ENCODE measurements at regions of chr18 and their contacts with region 1.

Region 1: GRCh38 chr18:50819728-50820378 is at the start of gene MRO:
- DNase-seq: peak; percentile 49 to 88
- H3K4me3 ChIP-seq: peak within 1 kb of the TSS; percentile 42 to 55
- H3K27ac ChIP-seq: no peak within 1 kb of the TSS
- H3K4me1 ChIP-seq: peaks cover 0 to 6% of the 10 kb centered on the region in 2 donors
- H3K27me3 ChIP-seq: no peaks in the 10 kb centered on the region
- CTCF ChIP-seq: peak; percentile 82 to 94 (median 85)
- total RNA-seq, gene MRO: 1.4 TPM

Region 2: DNA sequence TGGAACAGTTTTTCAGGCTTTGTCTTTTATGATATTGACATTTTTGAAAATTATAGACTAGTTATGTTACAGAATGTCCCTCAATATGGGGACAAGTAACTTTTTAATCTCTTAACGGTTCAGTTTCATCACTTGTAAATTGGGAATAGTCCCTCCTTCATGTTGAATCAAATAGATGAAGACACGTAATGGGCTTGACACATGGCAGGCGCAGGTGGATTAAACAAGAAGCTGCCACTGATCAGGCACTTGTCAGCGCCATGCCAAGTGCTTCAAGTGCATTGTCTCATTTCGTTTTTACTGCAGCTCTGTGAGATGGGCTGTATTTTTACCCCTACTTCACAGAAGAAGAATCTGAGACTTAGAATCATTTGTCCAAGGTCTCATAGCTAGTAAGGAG is 200.7 kb after region 1 on chr18:
- intact Hi-C with region 1: loop called (anchors 5 kb)
- DNase-seq: no peak
- H3K4me3 ChIP-seq: no peak overlapping the region
- H3K27ac ChIP-seq: no peak overlapping the region
- H3K4me1 ChIP-seq: no peaks in the 10 kb centered on the region
- H3K27me3 ChIP-seq: no peaks in the 10 kb centered on the region
- CTCF ChIP-seq: no peak

Region 3: GRCh38 chr18:51051105-51051712 is 231.4 kb after region 1 on chr18:
- intact Hi-C with region 1: loop called (anchors 2 kb)
- DNase-seq: no peak
- H3K4me3 ChIP-seq: no peak overlapping the region
- H3K27ac ChIP-seq: no peak overlapping the region
- H3K4me1 ChIP-seq: no peaks in the 10 kb centered on the region
- H3K27me3 ChIP-seq: no peaks in the 10 kb centered on the region
- CTCF ChIP-seq: peak; percentile 49 to 76 (median 65)

Measured in ascending aorta (tissue), 2 donors.